CD4-positive, alpha-beta T cell (primary cell): ENCODE measurements at regions of chr9 and their contacts with region 1.

Region 1: GRCh38 chr9:21533597-21533996 is 51.5 kb upstream of the IFNE start:
- DNase-seq: no peak
- ATAC-seq: no peak
- H3K4me3 ChIP-seq: no peak overlapping the region
- H3K4me3 Mint-ChIP-seq: no peak overlapping the region
- H3K27ac ChIP-seq: no peak overlapping the region
- H3K27ac Mint-ChIP-seq: no peak overlapping the region
- H3K4me1 ChIP-seq: no peaks in the 10 kb centered on the region
- H3K4me1 Mint-ChIP-seq: no peaks in the 10 kb centered on the region
- H3K27me3 ChIP-seq: no peaks in the 10 kb centered on the region
- H3K27me3 Mint-ChIP-seq: no peaks in the 10 kb centered on the region
- CTCF ChIP-seq: no peak

Region 2: DNA sequence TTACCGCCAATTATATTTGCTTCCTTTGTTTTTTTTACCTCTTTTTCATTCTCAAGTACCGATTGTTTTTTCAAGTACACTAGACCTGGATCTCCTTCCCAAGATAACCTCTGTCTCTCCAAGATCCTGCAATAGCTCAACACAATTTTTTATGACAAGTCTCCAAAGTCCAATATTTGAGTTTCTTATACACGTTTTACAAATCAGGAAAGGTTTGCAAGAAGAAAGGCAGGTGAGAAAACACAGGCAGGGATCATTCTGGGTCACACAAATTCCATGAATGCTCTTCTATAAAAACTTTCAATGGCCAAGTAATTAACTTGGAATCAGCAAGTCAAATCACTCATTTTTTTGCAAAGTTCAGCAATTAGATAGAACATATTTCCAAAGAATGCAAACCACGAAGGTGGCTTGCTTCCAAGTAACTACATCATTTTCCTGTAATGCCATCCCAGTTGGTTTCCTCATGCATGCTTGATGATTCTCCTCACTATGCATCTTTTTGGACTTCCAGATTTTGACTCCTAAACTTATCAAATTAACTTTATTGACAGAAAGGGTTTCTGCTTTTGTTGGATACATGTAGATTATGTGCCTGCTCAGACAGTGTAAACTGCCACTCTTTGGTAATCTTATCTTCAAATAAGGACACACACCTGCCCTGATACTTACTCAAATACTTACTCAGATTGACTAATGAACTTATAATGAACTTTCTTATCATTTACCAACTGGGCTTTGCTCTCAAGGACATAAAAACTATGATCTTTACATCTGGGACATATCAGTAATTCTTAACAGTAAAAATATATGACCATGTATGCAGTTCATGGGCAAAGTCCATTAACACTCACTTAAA is 26.7 kb before region 1 on chr9:
- CTCF ChIA-PET with region 1: no interaction called
- POLR2A ChIA-PET with region 1: no interaction called
- intact Hi-C with region 1: no loop called
- DNase-seq: no peak
- ATAC-seq: no peak
- H3K4me3 ChIP-seq: no peak overlapping the region
- H3K4me3 Mint-ChIP-seq: no peak overlapping the region
- H3K27ac ChIP-seq: no peak overlapping the region
- H3K27ac Mint-ChIP-seq: no peak overlapping the region
- H3K4me1 ChIP-seq: peaks cover 3% of the 10 kb centered on the region
- H3K4me1 Mint-ChIP-seq: no peaks in the 10 kb centered on the region
- H3K27me3 ChIP-seq: no peaks in the 10 kb centered on the region
- H3K27me3 Mint-ChIP-seq: no peaks in the 10 kb centered on the region
- CTCF ChIP-seq: no peak

Region 3: DNA sequence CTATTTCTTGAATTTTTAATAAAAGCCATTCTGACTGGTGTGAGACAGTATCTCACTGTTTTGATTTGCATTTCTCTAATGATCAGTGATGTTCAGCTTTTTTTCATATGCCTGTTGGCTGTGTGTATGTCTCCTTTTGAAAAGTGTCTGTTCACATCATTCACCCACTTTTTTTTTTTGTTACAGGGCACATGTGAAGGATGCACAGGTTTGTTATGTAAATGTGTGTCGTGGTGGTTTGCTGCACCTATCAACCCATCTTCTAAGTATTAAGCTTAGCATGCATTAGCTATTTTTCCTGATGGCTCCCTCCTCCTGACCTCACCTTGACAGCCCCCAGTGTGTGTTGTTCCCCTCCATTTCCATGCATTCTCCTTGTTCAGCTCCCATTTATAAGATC is 12.1 kb before region 1 on chr9:
- CTCF ChIA-PET with region 1: no interaction called
- POLR2A ChIA-PET with region 1: no interaction called
- intact Hi-C with region 1: loop called in 1 of 2 experiments (anchors 1 kb)
- DNase-seq: no peak
- ATAC-seq: no peak
- H3K4me3 ChIP-seq: no peak overlapping the region
- H3K4me3 Mint-ChIP-seq: no peak overlapping the region
- H3K27ac ChIP-seq: no peak overlapping the region
- H3K27ac Mint-ChIP-seq: no peak overlapping the region
- H3K4me1 ChIP-seq: no peaks in the 10 kb centered on the region
- H3K4me1 Mint-ChIP-seq: no peaks in the 10 kb centered on the region
- H3K27me3 ChIP-seq: no peaks in the 10 kb centered on the region
- H3K27me3 Mint-ChIP-seq: no peaks in the 10 kb centered on the region
- CTCF ChIP-seq: no peak